ENCODE measurements at regions of chrX and their contacts with region 1.

Region 1: GRCh38 chrX:13487731-13488523 is 81.5 kb upstream of the EGFL6 start:
- DNase-seq: peak; percentile 42
- H3K4me3 ChIP-seq: no peak overlapping the region
- H3K27ac ChIP-seq: peak overlapping the region; percentile 44 to 68
- H3K4me1 ChIP-seq: peaks cover 6% of the 10 kb centered on the region
- H3K27me3 ChIP-seq: no peaks in the 10 kb centered on the region
- CTCF ChIP-seq: peak; percentile 21 to 73 (median 67)
- POLR2A ChIP-seq: no peak

Region 2: GRCh38 chrX:12974796-12975669 is 512.9 kb before region 1 on chrX and contains the start of gene TMSB4X:
- intact Hi-C with region 1: loop called (anchors 5 kb)
- DNase-seq: peak; percentile 81
- H3K4me3 ChIP-seq: peak within 1 kb of the TSS; percentile 72 to 85
- H3K27ac ChIP-seq: peak within 1 kb of the TSS; percentile 91 to 93
- H3K4me1 ChIP-seq: no peaks in the 10 kb centered on the region
- H3K27me3 ChIP-seq: no peaks in the 10 kb centered on the region
- CTCF ChIP-seq: no peak
- POLR2A ChIP-seq: peak; percentile 62
- total RNA-seq, gene TMSB4X: 384 to 669 TPM

Region 3: GRCh38 chrX:13180807-13181206 is 307.1 kb before region 1 on chrX:
- intact Hi-C with region 1: no loop called
- DNase-seq: no peak
- H3K4me3 ChIP-seq: no peak overlapping the region
- H3K27ac ChIP-seq: no peak overlapping the region
- H3K4me1 ChIP-seq: no peaks in the 10 kb centered on the region
- H3K27me3 ChIP-seq: no peaks in the 10 kb centered on the region
- CTCF ChIP-seq: no peak
- POLR2A ChIP-seq: no peak

Region 4: DNA sequence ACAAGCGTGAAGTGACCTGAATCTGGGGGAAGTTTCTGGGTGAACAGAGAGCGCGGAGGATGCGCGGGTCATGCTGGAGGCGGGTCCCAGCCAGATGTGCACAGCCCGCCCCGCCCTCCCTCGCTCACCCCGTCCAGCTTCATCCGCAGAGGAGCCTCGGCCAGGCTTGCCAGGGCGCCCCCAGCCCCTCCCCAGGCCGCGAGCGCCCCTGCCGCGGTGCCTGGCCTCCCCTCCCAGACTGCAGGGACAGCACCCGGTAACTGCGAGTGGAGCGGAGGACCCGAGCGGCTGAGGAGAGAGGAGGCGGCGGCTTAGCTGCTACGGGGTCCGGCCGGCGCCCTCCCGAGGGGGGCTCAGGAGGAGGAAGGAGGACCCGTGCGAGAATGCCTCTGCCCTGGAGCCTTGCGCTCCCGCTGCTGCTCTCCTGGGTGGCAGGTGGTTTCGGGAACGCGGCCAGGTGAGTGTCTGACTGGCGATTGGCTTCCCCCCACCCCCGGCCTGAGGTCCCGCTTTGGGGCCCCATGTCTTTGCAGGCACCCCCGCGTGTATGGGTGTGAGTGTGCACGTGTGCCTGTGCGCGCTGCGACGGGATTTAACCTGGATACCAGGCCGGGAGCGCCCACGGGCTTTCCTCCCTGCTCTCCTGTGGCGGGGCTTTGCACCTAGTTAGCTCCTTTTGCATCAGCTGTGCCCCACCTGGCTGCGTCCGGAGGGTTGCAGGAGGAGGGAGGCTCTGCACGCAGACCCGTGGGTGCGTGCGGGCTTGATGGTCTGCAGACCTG is 81.7 kb after region 1 on chrX and contains the start of gene EGFL6:
- intact Hi-C with region 1: no loop called
- DNase-seq: no peak
- H3K4me3 ChIP-seq: peak within 1 kb of the TSS in 1 of 2 donors; percentile 23
- H3K27ac ChIP-seq: no peak within 1 kb of the TSS
- H3K4me1 ChIP-seq: no peaks in the 10 kb centered on the region
- H3K27me3 ChIP-seq: no peaks in the 10 kb centered on the region
- CTCF ChIP-seq: no peak
- POLR2A ChIP-seq: no peak
- total RNA-seq, gene EGFL6: 0.56 to 1.7 TPM